Cardiac septum (tissue), 1 donor: ENCODE measurements at regions of chr9 and their contacts with region 1.

Region 1: GRCh38 chr9:76810377-76810957 is 46.2 kb downstream of the PCA3 start:
- DNase-seq: no peak

Region 2: GRCh38 chr9:76846297-76846696 is 35.8 kb after region 1 on chr9:
- intact Hi-C with region 1: no loop called
- DNase-seq: no peak

Region 3: GRCh38 chr9:76943054-76943453 is 132.6 kb after region 1 on chr9:
- intact Hi-C with region 1: no loop called
- DNase-seq: no peak

Region 4: GRCh38 chr9:76987594-76988200 is 177.2 kb after region 1 on chr9:
- intact Hi-C with region 1: loop called (anchors 5 kb)
- DNase-seq: no peak

Region 5: GRCh38 chr9:76996700-76997099 is 186.2 kb after region 1 on chr9:
- intact Hi-C with region 1: loop called (anchors 2 kb)
- DNase-seq: no peak

Region 6: DNA sequence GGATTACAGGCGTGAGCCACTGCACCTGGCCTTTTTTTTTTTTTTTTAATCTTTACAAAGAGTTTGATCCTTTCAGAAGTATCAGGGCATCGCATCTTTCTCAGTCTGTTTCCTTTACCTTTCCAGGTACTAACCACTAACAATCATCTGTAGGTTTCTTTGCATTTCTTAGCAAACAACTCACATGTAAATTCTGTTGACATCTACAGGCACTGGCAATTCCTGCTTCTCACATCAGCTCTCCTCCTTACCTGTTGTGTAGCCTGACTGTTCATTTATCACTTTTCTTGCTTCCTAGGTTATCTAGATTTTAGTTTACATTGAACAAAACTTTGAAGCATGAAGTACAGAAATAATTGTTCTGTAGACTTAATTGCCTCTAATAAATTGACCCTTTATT is 339.4 kb after region 1 on chr9:
- intact Hi-C with region 1: loop called (anchors 5 kb)
- DNase-seq: no peak